Activated CD4-positive, alpha-beta T cell treated with anti-CD3 and anti-CD28 coated beads for 36 hours (primary cell): ENCODE measurements at regions of chr3 and their contacts with region 1.

Region 1: DNA sequence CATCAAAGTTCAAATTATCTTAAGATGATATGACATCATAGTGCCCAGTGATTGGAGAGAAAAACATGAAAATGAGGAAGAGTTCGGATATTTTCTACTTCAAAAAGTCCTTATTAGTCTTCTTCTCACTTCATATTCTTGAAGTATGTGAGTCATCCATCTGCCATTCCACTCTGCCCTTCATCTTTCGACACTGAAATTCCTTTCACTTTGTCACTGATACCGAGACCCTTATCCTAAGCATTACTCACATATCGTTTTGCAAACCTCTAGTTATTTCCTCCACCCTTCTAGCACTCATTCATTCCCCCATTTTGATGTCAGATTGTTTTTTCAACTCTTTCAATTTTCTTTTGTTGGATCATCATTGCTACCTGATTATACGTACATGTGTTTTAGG is 4.0 kb downstream of the OR5H14 start:
- DNase-seq: no peak
- ATAC-seq: no peak
- H3K4me3 Mint-ChIP-seq: no peak overlapping the region
- H3K27ac Mint-ChIP-seq: no peak overlapping the region
- H3K4me1 Mint-ChIP-seq: no peaks in the 10 kb centered on the region
- H3K27me3 Mint-ChIP-seq: peaks cover 3% of the 10 kb centered on the region

Region 2: DNA sequence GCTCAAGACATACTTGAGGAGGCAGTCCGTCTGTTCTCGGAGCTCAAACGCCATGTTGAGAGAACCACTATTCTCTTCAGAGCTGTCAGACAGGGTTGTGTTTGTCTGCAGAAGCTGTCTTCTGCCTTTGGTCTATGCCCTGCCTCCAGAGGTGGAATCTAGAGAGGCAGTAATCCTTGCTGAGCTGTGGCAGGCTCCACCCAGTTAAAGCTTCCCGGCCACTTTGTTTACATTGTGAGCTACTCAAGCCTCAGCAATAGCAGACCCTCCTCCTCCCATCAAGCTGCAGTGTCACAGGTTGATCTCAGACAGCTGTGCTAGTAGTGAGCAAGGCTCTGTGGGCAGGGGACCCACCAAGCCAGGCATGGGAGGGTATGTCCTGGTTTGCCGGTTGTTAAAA is 55.4 kb before region 1 on chr3:
- CTCF ChIA-PET with region 1: no interaction called
- POLR2A ChIA-PET with region 1: no interaction called
- intact Hi-C with region 1: loop called in 1 of 2 experiments (anchors 10 kb)
- DNase-seq: no peak
- ATAC-seq: no peak
- H3K4me3 Mint-ChIP-seq: no peak overlapping the region
- H3K27ac Mint-ChIP-seq: no peak overlapping the region
- H3K4me1 Mint-ChIP-seq: no peaks in the 10 kb centered on the region
- H3K27me3 Mint-ChIP-seq: peaks cover 5% of the 10 kb centered on the region

Region 3: GRCh38 chr3:98209244-98209643 is 58.0 kb after region 1 on chr3:
- CTCF ChIA-PET with region 1: no interaction called
- POLR2A ChIA-PET with region 1: interaction called, 3 read pairs
- intact Hi-C with region 1: loop called in 1 of 2 experiments (anchors 1 kb)
- DNase-seq: no peak
- ATAC-seq: no peak
- H3K4me3 Mint-ChIP-seq: no peak overlapping the region
- H3K27ac Mint-ChIP-seq: no peak overlapping the region
- H3K4me1 Mint-ChIP-seq: no peaks in the 10 kb centered on the region
- H3K27me3 Mint-ChIP-seq: no peaks in the 10 kb centered on the region